CD4-positive, alpha-beta T cell (primary cell): ENCODE measurements at regions of chr5 and their contacts with region 1.

Region 1: DNA sequence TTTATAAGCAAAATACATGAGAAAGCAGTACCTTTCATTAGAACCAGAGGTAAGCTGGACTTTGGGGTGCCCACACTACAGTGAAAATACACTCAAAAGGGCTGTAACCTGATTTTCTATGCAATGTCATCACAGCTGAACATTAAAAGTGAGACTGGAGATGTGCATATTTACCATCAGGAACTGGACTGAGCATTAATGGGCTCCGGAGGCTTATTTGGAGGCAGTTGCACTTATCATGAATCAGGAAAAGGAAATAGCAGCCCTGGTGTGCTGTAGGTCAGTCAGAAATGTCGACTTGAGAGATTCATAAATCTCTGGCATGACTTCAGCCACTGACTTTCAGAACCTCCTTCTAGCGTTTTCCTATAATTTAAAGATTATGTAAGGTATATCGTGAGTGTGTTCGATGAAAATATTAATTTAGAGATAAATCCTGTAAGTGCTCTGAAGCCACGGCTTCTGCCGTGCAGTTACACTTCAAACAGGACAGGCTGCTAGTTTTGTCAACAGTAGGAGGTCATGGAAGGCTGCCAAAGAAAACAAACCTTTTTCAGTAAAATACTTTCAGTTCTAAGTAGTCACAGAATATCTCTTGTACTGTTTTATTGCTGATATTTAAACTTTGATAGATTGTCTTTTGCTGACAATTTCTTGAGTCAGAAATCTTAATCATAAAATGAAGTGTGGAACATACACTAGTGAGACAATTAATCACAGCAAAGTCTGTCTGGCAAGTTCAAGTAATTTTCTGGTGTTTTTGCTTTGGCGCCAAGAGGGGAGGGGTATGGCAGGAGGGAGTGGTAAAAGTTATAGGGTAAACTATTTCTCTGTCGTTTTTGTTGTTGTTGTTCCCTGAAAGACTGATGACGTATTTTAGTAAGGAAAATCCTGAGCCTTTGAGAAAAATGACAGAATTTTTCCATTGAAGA is 939.7 kb downstream of the NR2F1-AS1 start:
- DNase-seq: no peak
- ATAC-seq: no peak
- H3K4me3 ChIP-seq: no peak overlapping the region
- H3K4me3 Mint-ChIP-seq: no peak overlapping the region
- H3K27ac ChIP-seq: no peak overlapping the region
- H3K27ac Mint-ChIP-seq: no peak overlapping the region
- H3K4me1 ChIP-seq: no peaks in the 10 kb centered on the region
- H3K4me1 Mint-ChIP-seq: no peaks in the 10 kb centered on the region
- H3K27me3 ChIP-seq: no peaks in the 10 kb centered on the region
- H3K27me3 Mint-ChIP-seq: no peaks in the 10 kb centered on the region
- CTCF ChIP-seq: no peak

Region 2: DNA sequence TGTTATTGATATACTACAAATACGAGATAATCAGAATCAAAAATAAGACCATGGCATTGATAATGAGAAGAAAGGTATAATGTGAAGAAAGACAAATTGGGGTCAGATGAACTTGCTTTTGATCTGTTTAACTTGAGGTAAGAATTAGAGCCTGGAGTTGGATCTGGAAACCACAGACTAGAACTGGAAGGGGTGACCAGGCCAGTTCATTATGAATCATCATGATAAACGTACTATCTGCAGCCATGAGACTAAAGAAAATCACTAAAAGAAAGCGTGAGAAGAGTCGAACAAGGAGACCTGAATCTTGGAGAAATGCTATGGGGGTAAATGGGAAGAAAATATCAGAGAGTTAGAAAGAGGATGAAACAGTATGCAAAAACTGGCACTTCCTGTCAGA is 27.8 kb before region 1 on chr5:
- CTCF ChIA-PET with region 1: no interaction called
- POLR2A ChIA-PET with region 1: no interaction called
- intact Hi-C with region 1: loop called in 1 of 2 experiments (anchors 1 kb)
- DNase-seq: no peak
- ATAC-seq: no peak
- H3K4me3 ChIP-seq: no peak overlapping the region
- H3K4me3 Mint-ChIP-seq: no peak overlapping the region
- H3K27ac ChIP-seq: no peak overlapping the region
- H3K27ac Mint-ChIP-seq: no peak overlapping the region
- H3K4me1 ChIP-seq: no peaks in the 10 kb centered on the region
- H3K4me1 Mint-ChIP-seq: no peaks in the 10 kb centered on the region
- H3K27me3 ChIP-seq: no peaks in the 10 kb centered on the region
- H3K27me3 Mint-ChIP-seq: no peaks in the 10 kb centered on the region
- CTCF ChIP-seq: no peak

Region 3: DNA sequence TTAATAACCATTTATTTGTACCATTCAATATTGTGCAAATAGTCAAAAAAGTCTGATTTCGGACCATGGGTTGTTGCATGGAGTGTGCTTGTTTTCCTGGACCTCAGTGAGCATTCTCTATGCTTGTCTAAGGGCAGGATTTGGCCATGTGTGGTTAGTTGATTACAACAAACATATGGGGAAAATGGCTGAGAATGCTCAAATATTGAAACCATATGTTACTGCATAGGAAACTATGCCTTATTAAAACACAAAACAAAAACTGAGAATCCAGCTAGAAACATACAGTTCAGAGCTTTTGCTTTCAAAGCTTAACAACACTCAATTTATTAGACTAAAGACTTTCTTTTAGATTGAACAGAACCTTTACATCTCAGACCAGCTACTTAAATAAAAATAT is 11.5 kb after region 1 on chr5:
- CTCF ChIA-PET with region 1: no interaction called
- POLR2A ChIA-PET with region 1: no interaction called
- intact Hi-C with region 1: no loop called
- DNase-seq: no peak
- ATAC-seq: no peak
- H3K4me3 ChIP-seq: no peak overlapping the region
- H3K4me3 Mint-ChIP-seq: no peak overlapping the region
- H3K27ac ChIP-seq: no peak overlapping the region
- H3K27ac Mint-ChIP-seq: no peak overlapping the region
- H3K4me1 ChIP-seq: no peaks in the 10 kb centered on the region
- H3K4me1 Mint-ChIP-seq: no peaks in the 10 kb centered on the region
- H3K27me3 ChIP-seq: no peaks in the 10 kb centered on the region
- H3K27me3 Mint-ChIP-seq: no peaks in the 10 kb centered on the region
- CTCF ChIP-seq: no peak

Region 4: DNA sequence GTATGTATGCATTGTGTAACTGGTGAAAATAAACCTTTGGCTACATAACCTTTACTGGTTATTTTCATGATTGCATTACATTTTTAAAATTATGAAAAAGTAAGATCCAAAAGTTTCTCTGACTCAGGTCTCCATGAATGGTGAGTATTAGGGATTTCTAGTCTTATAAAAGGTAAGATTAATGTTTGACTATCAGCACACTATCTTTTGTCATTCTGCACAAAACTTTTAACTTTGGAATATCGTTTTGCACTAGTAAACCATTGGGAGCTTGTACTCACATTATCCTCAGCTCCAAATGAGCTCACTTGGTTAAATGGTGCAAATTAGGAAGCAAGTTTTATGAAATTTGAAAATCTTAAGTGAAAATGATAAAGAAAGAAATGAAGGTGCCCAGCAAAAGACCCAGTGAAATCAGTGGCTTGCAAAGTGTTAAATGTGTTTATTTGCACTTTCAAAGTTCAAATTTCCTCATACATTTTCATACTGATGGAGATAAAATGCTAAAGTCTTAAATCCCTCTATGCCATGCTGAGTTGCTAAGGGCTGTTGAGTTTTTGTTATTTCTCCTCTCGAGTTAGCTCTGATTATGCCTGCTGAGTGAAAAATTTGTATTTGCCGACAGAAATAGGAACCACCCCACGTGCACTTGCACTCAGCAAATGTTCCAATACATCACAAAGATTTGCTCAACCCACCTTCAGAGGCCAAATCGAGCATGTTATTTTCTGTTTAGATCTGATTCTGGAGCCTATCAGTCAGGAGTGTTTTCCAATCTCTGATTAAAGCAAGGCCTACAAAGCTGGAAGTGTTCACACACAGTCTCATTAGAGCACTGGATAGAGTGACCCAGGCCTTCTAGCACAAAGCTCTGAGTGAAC is 54.1 kb after region 1 on chr5:
- CTCF ChIA-PET with region 1: no interaction called
- POLR2A ChIA-PET with region 1: no interaction called
- intact Hi-C with region 1: no loop called
- DNase-seq: no peak
- ATAC-seq: no peak
- H3K4me3 ChIP-seq: no peak overlapping the region
- H3K4me3 Mint-ChIP-seq: no peak overlapping the region
- H3K27ac ChIP-seq: no peak overlapping the region
- H3K27ac Mint-ChIP-seq: no peak overlapping the region
- H3K4me1 ChIP-seq: no peaks in the 10 kb centered on the region
- H3K4me1 Mint-ChIP-seq: no peaks in the 10 kb centered on the region
- H3K27me3 ChIP-seq: no peaks in the 10 kb centered on the region
- H3K27me3 Mint-ChIP-seq: no peaks in the 10 kb centered on the region
- CTCF ChIP-seq: no peak